PC-9 (cell line): ENCODE measurements at regions of chrX and their contacts with region 1.

Region 1: DNA sequence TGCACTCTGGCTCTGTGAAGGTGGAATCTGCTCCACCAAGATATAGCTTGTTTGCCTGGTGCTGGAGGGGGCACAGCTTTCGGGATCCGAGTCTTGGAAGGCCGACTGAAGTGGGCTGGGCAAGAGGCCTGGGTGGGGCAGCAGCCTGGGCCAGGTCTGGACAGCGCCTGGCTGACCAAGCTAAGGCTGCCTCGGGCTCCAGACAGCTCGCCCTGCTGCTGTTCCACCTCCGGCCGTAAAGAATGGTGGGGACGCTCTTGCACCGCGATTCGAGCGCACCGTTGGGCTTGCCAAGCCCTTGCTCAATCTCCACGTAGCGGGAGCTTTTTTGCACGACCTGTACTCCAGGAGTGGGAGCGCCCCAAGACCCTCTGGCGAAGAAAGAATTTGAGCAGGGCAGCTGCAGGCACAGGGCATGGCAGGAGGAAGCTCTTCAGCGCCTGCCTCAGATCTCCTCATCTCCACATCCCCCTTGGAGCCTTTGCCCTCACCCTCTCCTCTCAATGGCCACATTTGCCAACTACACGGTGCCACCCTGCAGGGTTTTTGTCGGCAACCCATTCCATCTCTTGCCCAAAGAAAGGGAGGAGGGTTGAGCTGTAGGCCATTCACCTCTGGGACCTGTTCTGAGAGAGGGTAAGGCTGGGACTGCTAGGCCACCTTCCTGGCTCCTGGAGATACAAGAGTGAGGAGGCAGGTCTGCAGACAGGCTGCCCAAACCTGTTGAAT is 18.9 kb downstream of the CNGA2 start:
- DNase-seq: peak; percentile 71 to 79
- H3K4me3 ChIP-seq: peak overlapping the region; percentile 36; the same call in 1 of the 2 replicates
- H3K27ac ChIP-seq: peak overlapping the region; percentile 78
- H3K4me1 ChIP-seq: peaks cover 22% of the 10 kb centered on the region
- H3K27me3 ChIP-seq: no peaks in the 10 kb centered on the region
- CTCF ChIP-seq: peak; percentile 99

Region 2: DNA sequence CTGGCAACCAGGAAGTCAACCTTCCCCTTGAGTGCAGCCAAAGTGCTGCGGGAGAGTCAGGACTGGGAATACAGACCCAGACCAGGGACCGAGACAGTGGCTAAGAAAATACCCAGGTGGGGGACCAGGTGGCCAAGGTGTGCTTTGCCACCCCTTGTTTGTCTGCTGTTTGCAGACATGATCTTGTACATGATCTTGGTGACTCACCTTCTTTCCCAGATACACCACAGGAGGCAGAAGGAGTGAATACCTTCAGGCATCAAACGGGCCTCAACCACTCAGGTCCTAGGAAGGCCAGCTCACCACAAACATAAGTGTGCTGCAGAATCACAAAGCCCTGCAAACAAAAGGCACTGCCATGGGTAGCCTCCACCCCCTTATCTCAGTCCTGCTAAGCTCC is 43.1 kb after region 1 on chrX:
- CTCF ChIA-PET with region 1: interaction called, 3 read pairs
- POLR2A ChIA-PET with region 1: interaction called, 3 read pairs
- intact Hi-C with region 1: loop called (anchors 1 kb)
- DNase-seq: peak; percentile 55 to 96
- H3K4me3 ChIP-seq: 0 out of 2 replicates have a peak overlapping the region, but pooled peaks have one; percentile 1
- H3K27ac ChIP-seq: peak overlapping the region; percentile 79
- H3K4me1 ChIP-seq: peaks cover 50% of the 10 kb centered on the region
- H3K27me3 ChIP-seq: no peaks in the 10 kb centered on the region
- CTCF ChIP-seq: no peak

Region 3: DNA sequence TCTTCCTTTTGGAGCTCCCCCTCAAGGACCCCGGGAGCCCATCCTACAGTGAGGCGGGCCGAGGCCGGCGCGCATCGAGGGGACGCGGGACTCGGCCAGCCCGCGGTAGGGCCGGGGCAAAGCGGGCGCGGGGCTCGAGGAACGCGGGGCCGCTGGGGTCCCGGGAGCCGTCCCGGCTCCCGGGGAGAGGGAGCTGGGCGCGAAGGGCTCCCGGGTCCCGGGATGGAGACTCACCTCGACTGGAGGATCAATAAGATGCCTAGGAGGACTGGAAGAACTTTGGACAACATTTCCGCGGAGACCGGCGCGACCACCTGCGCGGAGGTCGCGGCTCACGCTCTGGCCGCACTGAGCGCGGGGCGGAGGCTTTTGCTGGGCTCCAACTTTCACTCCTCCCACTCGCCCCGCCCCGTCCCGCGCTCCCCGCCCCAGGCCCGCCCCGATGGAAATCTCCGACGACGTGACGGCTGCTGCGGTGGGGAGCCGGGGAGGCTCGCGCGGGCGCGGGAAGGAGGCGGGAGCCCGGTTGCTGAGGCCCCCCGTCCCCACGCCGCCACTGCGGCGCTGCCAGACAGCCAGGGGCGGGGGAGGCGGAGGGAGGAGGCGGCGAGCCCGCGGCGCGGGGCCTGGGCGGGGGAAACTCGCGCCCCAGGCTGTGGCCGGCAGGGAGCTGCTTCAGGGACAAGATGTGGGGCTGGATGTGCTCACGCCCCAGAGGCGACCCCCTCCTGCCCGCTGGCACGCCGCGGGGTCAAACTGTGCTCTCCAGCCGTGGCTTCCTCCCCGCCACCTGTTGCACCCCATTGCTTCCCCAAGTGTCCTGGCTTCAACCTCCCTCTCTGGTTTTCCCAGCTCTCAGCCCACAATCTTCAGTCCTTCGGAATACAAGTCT is 221.1 kb after region 1 on chrX and contains the start of gene GABRE:
- CTCF ChIA-PET with region 1: no interaction called
- POLR2A ChIA-PET with region 1: no interaction called
- intact Hi-C with region 1: loop called (anchors 10 kb)
- DNase-seq: peak in 1 of 2 experiments; percentile 9
- H3K4me3 ChIP-seq: peak within 1 kb of the TSS; percentile 57
- H3K27ac ChIP-seq: peak within 1 kb of the TSS; percentile 8; the same call in 1 of the 2 replicates
- H3K4me1 ChIP-seq: peaks cover 49% of the 10 kb centered on the region
- H3K27me3 ChIP-seq: no peaks in the 10 kb centered on the region
- CTCF ChIP-seq: no peak
- total RNA-seq, gene GABRE: 22.1 and 24.5 TPM in 2 replicates

Region 4: DNA sequence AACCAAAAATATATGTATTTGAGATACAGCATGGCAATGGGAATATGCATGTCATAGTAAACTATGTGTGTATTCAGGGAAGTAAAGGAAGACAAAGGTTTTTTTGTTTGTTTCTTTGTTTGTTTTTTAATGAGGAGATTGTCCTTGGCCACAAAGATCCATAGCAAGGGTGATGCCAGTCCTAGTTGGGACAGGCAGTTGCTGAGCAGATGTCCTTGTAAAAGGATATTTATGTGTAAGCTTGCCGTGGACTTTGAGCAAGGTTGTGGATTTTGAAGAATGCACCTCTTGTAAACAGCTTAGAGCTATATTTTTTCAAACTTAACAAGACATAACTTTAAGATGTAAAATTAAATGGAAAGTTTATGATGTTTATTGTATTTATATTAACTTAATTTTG is 290.9 kb after region 1 on chrX:
- CTCF ChIA-PET with region 1: no interaction called
- POLR2A ChIA-PET with region 1: no interaction called
- intact Hi-C with region 1: loop called (anchors 10 kb)
- DNase-seq: no peak
- H3K4me3 ChIP-seq: no peak overlapping the region
- H3K27ac ChIP-seq: no peak overlapping the region
- H3K4me1 ChIP-seq: peaks cover 12% of the 10 kb centered on the region
- H3K27me3 ChIP-seq: no peaks in the 10 kb centered on the region
- CTCF ChIP-seq: no peak

Region 5: GRCh38 chrX:152632445-152633097 is 879.1 kb after region 1 on chrX:
- CTCF ChIA-PET with region 1: interaction called, 4 read pairs
- POLR2A ChIA-PET with region 1: no interaction called
- intact Hi-C with region 1: loop called (anchors 1 kb)
- DNase-seq: peak; percentile 49 to 62
- H3K4me3 ChIP-seq: no peak overlapping the region
- H3K27ac ChIP-seq: no peak overlapping the region
- H3K4me1 ChIP-seq: no peaks in the 10 kb centered on the region
- H3K27me3 ChIP-seq: no peaks in the 10 kb centered on the region
- CTCF ChIP-seq: peak; percentile 98

Region 6: DNA sequence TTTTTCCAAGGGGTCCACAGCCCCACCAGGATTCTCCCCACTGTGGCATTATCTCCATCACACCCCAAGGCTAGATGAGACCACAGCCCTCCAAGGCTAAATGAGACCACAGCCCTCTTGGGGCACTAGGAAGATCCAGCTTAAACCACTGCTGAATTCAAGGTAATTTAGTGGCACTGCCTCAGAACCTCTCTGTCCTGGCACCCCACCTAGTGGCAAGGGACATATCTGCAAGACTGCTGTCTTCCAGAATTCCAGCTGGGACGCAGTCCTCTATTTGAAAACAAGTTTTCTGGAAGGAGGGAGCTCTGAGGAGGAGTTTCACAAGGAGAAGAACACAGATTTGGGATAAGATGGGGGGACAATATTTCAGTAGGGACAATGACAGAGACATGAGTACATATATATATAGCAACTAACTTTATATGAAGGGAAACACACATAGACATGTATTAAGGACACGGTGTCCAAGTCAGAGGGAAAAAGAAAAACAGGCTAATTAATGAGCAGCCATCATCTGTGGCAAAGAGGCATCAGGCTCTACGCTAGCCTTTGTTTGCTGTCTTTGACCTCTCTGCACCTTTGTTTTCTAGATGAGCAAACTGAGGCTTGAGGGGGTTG is 1067.8 kb after region 1 on chrX:
- CTCF ChIA-PET with region 1: interaction called, 6 read pairs
- POLR2A ChIA-PET with region 1: no interaction called
- intact Hi-C with region 1: loop called (anchors 1 kb)
- DNase-seq: peak; percentile 53 to 55
- H3K4me3 ChIP-seq: no peak overlapping the region
- H3K27ac ChIP-seq: no peak overlapping the region
- H3K4me1 ChIP-seq: no peaks in the 10 kb centered on the region
- H3K27me3 ChIP-seq: no peaks in the 10 kb centered on the region
- CTCF ChIP-seq: peak; percentile 97

Region 7: GRCh38 chrX:152926279-152926678 is 1172.8 kb after region 1 on chrX:
- CTCF ChIA-PET with region 1: no interaction called
- POLR2A ChIA-PET with region 1: no interaction called
- intact Hi-C with region 1: loop called (anchors 2 kb)
- DNase-seq: peak; percentile 89 to 93
- H3K4me3 ChIP-seq: no peak overlapping the region
- H3K27ac ChIP-seq: no peak overlapping the region
- H3K4me1 ChIP-seq: peaks cover 11% of the 10 kb centered on the region
- H3K27me3 ChIP-seq: no peaks in the 10 kb centered on the region
- CTCF ChIP-seq: peak; percentile 90